HEK293 (cell line): ENCODE measurements at regions of chr11 and their contacts with region 1.

Region 1: DNA sequence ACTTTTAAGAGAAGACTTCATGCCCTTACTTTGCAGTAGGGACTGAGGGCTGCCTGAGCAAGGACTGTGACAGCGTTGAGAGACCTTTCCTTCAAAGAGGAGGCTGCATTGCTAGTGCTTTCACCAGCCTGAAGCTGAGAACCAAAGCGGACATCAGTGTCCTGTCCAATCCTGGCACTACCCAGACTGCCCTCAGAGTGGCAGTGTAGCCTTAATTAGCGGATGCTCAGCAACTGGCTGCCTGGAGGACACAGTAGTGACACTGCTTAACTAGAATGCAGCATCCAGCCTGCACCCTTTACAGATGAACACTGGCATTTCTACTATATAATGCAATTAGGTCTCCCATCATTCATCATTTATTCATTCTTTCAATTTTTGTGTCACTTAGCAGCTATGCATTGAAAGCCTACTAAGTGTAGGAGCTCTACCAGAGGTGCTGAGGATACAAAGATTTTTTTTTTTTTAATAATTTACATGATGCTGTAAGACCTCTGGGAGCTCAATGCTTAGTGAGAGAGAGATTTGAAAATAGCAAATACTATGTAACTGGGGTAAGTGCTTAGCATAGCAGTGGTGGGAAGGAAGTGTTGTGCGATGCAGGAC is 36.9 kb upstream of the SLC36A4 start:
- H3K4me3 ChIP-seq: no peak overlapping the region
- H3K27ac ChIP-seq: no peak overlapping the region
- H3K4me1 ChIP-seq: no peaks in the 10 kb centered on the region
- CTCF ChIP-seq: peak; percentile 83

Region 2: DNA sequence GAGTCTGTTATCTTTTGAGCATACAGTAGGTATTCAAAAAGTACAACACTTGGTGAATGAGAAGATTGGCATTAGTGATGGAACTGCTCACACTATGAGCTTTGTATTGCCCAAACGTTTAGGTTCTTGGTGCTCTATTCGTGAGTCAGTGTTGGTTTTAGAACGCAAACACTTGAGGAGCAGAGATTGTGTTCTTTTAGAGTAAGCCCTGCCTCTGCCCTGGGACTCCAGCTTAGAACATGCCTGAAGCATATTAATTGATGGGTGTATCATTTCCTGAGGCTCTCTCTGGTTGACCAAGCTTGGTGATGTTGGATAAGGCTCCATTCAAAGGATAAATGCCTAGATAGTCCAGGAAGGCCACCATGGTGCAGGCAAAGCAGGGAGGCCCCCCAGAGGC is 254.4 kb before region 1 on chr11:
- CTCF ChIA-PET with region 1: no interaction called
- POLR2A ChIA-PET with region 1: no interaction called
- H3K4me3 ChIP-seq: no peak overlapping the region
- H3K27ac ChIP-seq: no peak overlapping the region
- H3K4me1 ChIP-seq: no peaks in the 10 kb centered on the region
- CTCF ChIP-seq: no peak

Region 3: DNA sequence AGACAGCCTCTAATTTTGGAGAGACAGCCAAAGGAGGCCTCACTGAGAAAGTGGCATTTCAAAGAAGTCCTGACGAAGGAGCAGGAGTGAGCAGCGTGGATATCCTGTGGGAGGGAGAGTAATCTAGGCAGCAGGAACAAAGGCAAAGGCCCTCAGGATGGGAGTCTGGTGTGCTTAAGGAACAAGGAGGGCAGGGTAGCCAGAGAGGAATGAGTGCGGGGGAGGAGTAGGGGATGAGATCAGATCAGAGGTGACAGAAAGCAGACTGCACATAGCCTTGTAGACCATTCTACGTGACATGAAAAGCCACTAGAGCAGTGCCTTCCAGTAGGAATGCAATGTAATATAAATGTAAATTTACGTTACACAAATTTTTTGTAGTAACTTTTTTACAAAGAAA is 42.5 kb before region 1 on chr11:
- CTCF ChIA-PET with region 1: no interaction called
- POLR2A ChIA-PET with region 1: no interaction called
- H3K4me3 ChIP-seq: no peak overlapping the region
- H3K27ac ChIP-seq: no peak overlapping the region
- H3K4me1 ChIP-seq: no peaks in the 10 kb centered on the region
- CTCF ChIP-seq: no peak

Region 4: DNA sequence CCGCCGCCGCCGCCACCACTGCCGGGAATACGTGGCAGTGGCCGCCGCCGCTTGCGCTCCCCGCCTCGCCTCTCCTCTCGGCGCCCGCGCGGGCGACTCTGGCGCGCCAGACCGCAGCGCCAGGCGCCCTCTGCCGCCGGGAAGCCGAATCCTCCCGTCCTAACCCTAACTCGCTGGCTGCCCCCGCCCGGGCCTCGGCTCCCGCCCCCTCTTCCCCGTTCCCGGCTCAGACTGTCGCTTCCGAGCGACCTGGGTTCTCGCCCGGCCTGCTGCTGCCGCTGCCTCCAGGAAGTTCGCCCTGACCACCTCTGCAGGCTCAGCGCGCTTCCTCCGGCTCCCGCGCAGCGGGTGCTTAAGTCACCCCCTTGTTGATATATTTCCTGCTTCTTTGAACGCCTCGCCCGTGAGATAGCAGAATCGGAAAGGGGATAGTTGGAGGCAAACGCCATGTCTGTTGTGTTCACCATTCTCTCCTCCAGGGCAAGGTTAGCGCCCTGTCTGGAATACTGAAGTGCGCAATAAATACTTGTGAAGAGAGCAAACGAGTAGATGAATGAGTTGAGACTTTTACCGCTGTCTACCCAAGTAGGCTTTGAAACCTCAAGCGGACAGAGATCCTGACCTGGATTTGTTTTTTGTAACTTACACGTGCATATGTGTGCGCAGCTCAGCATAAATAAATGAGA is 308.7 kb after region 1 on chr11 and contains the start of gene SMCO4:
- CTCF ChIA-PET with region 1: interaction called, 21 read pairs
- POLR2A ChIA-PET with region 1: no interaction called
- H3K4me3 ChIP-seq: peak within 1 kb of the TSS; percentile 69
- H3K27ac ChIP-seq: peak within 1 kb of the TSS; percentile 64; the same call in 1 of the 2 replicates
- H3K4me1 ChIP-seq: no peaks in the 10 kb centered on the region; the same call in none of the 2 replicates
- CTCF ChIP-seq: peak; percentile 74

Region 5: DNA sequence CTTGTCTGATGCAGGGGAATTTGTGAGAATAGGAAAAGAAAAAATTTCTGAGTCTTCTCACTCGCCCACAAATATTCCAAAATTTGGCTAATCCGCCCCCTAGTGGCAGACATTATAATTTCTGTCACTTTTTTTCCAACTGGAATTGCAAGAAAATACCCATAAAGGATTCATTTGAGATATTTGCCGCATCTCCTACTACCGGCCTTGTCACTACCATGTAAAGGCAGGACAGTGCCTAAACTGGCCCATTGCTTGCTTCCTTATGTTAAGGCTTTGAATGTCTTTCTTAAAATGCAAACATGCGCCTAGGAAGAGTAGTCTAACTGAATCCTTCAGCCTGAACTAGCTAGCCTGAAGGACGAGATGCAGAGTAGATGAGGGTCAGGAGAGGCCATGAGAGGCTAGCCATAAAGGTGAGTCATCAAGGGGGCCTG is 417.5 kb after region 1 on chr11:
- CTCF ChIA-PET with region 1: interaction called, 74 read pairs
- POLR2A ChIA-PET with region 1: interaction called, 3 read pairs
- H3K4me3 ChIP-seq: no peak overlapping the region
- H3K27ac ChIP-seq: no peak overlapping the region
- H3K4me1 ChIP-seq: no peaks in the 10 kb centered on the region
- CTCF ChIP-seq: no peak